ENCODE measurements at regions of chr10 and their contacts with region 1.

Region 1: GRCh38 chr10:89369156-89370105 is 8.4 kb upstream of the IFIT1B start:
- DNase-seq: peak in 1 of 2 experiments; percentile 20
- ATAC-seq: peak in 1 of 2 experiments; percentile 74; a peak in 3 of 6 replicates
- H3K4me3 ChIP-seq: no peak overlapping the region
- H3K27ac ChIP-seq: peak overlapping the region in 1 of 2 experiments; percentile 50; a peak in 2 of 6 replicates
- H3K4me1 ChIP-seq: peaks cover 18% of the 10 kb centered on the region
- CTCF ChIP-seq: peak; percentile 79
- EP300 ChIP-seq: no peak
- POLR2A ChIP-seq: no peak
- RAD21 ChIP-seq: peak; percentile 77 to 78

Region 2: DNA sequence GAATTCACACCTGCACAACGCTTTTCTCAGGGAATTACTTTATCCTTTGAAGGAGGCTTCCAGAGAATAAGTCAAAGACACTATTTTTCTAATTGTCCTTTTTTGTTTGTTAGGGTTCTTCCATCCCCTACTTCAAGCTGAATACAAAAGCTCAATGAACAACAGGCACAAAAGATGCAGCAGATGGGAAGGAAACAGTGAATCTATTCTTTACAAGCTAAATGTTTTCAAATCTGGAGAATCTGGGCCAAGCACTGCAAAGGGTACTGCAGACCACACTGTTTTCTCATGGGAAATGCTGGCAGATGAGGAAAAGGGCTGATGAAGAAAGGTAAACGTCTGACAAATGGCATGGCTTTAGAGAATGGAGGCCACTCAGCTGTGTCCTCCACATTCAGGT is 136.4 kb before region 1 on chr10:
- CTCF ChIA-PET with region 1: no interaction called
- POLR2A ChIA-PET with region 1: no interaction called
- DNase-seq: no peak
- ATAC-seq: no peak
- H3K4me3 ChIP-seq: no peak overlapping the region
- H3K27ac ChIP-seq: no peak overlapping the region
- H3K4me1 ChIP-seq: no peaks in the 10 kb centered on the region
- CTCF ChIP-seq: no peak
- EP300 ChIP-seq: no peak
- POLR2A ChIP-seq: no peak
- RAD21 ChIP-seq: no peak

Region 3: GRCh38 chr10:89263531-89263930 is 105.9 kb before region 1 on chr10:
- CTCF ChIA-PET with region 1: interaction called, 27 read pairs
- POLR2A ChIA-PET with region 1: no interaction called
- DNase-seq: no peak
- ATAC-seq: no peak
- H3K4me3 ChIP-seq: no peak overlapping the region
- H3K27ac ChIP-seq: peak overlapping the region in 1 of 2 experiments; percentile 62; a peak in 2 of 6 replicates
- H3K4me1 ChIP-seq: peaks cover 29% of the 10 kb centered on the region
- CTCF ChIP-seq: no peak
- EP300 ChIP-seq: no peak
- POLR2A ChIP-seq: no peak
- RAD21 ChIP-seq: no peak

Region 4: GRCh38 chr10:89271552-89271951 is 97.9 kb before region 1 on chr10:
- CTCF ChIA-PET with region 1: interaction called, 27 read pairs
- POLR2A ChIA-PET with region 1: no interaction called
- DNase-seq: no peak
- ATAC-seq: no peak
- H3K4me3 ChIP-seq: no peak overlapping the region
- H3K27ac ChIP-seq: no peak overlapping the region
- H3K4me1 ChIP-seq: peaks cover 17% of the 10 kb centered on the region
- CTCF ChIP-seq: no peak
- EP300 ChIP-seq: no peak
- POLR2A ChIP-seq: no peak
- RAD21 ChIP-seq: no peak

Region 5: GRCh38 chr10:89278034-89278535 is 91.3 kb before region 1 on chr10:
- CTCF ChIA-PET with region 1: interaction called, 19 read pairs
- POLR2A ChIA-PET with region 1: no interaction called
- DNase-seq: peak; percentile 79 to 86
- ATAC-seq: peak; percentile 91 to 95
- H3K4me3 ChIP-seq: no peak overlapping the region
- H3K27ac ChIP-seq: peak overlapping the region; percentile 86 to 87
- H3K4me1 ChIP-seq: peaks cover 57% of the 10 kb centered on the region
- CTCF ChIP-seq: no peak
- EP300 ChIP-seq: peak; percentile 35 to 65; a peak in 2 of 5 replicates
- POLR2A ChIP-seq: no peak
- RAD21 ChIP-seq: peak; percentile 6 to 27; a peak in 2 of 5 replicates

Region 6: GRCh38 chr10:89283936-89284475 is 85.4 kb before region 1 on chr10:
- CTCF ChIA-PET with region 1: interaction called, 12 read pairs
- POLR2A ChIA-PET with region 1: no interaction called
- DNase-seq: peak; percentile 50 to 64
- ATAC-seq: peak; percentile 88 to 91
- H3K4me3 ChIP-seq: no peak overlapping the region
- H3K27ac ChIP-seq: peak overlapping the region; percentile 79 to 80
- H3K4me1 ChIP-seq: peaks cover 53% of the 10 kb centered on the region
- CTCF ChIP-seq: no peak
- EP300 ChIP-seq: no peak
- POLR2A ChIP-seq: no peak
- RAD21 ChIP-seq: no peak

Region 7: GRCh38 chr10:89346264-89347254 is 22.9 kb before region 1 on chr10:
- CTCF ChIA-PET with region 1: interaction called, 18 read pairs
- POLR2A ChIA-PET with region 1: no interaction called
- DNase-seq: peak in 1 of 2 experiments; percentile 42
- ATAC-seq: 0 out of 6 replicates have a peak, but pooled peaks of 1 of the 2 experiments have one; percentile 21
- H3K4me3 ChIP-seq: no peak overlapping the region
- H3K27ac ChIP-seq: peak overlapping the region; percentile 57 to 83
- H3K4me1 ChIP-seq: peaks cover 46% of the 10 kb centered on the region
- CTCF ChIP-seq: no peak
- EP300 ChIP-seq: no peak
- POLR2A ChIP-seq: no peak
- RAD21 ChIP-seq: no peak

Region 8: DNA sequence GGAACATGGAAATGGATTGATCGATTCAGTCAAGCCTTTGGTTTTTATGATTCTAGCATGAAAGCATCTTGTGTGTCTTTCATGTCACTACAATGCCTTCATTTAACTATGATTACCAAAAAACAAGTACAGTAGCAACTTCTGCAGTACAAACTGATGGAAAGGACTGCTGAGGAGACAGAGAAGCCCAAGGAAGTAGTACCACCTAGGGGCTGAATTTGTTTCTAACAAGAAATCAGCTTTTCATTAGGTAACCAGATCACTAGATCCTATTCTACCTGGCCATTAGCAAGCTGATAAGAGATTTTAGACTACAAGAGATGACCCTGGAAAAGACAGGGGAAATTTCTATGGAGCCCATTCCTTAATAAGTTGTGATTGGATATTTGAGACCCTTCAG is 19.8 kb after region 1 on chr10:
- CTCF ChIA-PET with region 1: interaction called, 26 read pairs
- POLR2A ChIA-PET with region 1: interaction called, 5 read pairs
- DNase-seq: peak in 1 of 2 experiments; percentile 57
- ATAC-seq: peak; percentile 44 to 64; a peak in 3 of 6 replicates
- H3K4me3 ChIP-seq: no peak overlapping the region
- H3K27ac ChIP-seq: no peak overlapping the region
- H3K4me1 ChIP-seq: peaks cover 13% of the 10 kb centered on the region
- CTCF ChIP-seq: peak; percentile 73
- EP300 ChIP-seq: no peak
- POLR2A ChIP-seq: no peak
- RAD21 ChIP-seq: peak; percentile 84 to 88

Measured in A549 (cell line).